ENCODE measurements at regions of chr20 and their contacts with region 1.

Region 1: GRCh38 chr20:62822788-62823651 is 6.2 kb downstream of the COL9A3 start:
- H3K4me3 Mint-ChIP-seq: no peak overlapping the region
- H3K27ac Mint-ChIP-seq: no peak overlapping the region
- H3K4me1 Mint-ChIP-seq: peaks cover 5% of the 10 kb centered on the region
- H3K27me3 Mint-ChIP-seq: peaks cover 33% of the 10 kb centered on the region

Region 2: DNA sequence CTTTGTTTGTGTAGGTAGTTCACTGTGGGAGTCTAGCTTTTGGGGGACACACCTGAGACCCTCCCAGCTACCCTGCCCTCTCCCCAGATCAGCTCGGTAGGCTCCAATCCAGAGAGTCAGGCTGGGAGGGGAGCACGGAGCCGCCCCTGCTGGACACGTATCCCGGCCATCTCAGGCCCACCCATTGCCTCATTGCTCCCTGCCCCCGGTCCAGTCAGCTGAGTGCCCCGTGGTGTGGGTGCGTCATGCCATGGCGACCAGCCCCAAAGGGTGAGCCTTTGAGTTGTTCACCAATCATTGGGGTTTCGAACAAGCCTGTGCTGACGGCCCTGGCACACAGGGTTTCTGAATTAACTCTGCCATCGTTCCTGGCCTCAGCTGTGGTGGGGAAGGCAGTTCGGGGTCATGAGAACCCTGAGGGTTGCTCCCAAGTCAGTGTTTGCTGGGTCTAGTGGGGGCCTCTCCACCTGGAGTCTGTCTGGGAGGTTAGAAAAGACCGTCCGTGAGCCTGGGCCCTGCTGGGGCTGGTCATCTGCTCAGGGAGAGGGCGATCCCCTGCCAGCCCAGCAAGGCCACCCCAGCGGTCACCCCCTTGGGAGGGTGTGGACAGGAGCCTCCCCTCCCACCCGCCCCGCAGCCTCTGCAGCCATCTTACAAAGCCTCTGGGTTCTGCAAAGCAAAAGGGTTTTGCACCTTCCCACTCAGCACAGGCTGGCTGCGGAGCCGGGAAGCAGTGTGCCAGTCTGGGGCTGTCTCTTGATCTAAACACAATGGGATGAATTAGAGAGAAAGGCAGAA is 79.8 kb before region 1 on chr20:
- intact Hi-C with region 1: no loop called
- H3K4me3 Mint-ChIP-seq: no peak overlapping the region
- H3K27ac Mint-ChIP-seq: no peak overlapping the region
- H3K4me1 Mint-ChIP-seq: peaks cover 17% of the 10 kb centered on the region
- H3K27me3 Mint-ChIP-seq: peaks cover 25% of the 10 kb centered on the region

Region 3: DNA sequence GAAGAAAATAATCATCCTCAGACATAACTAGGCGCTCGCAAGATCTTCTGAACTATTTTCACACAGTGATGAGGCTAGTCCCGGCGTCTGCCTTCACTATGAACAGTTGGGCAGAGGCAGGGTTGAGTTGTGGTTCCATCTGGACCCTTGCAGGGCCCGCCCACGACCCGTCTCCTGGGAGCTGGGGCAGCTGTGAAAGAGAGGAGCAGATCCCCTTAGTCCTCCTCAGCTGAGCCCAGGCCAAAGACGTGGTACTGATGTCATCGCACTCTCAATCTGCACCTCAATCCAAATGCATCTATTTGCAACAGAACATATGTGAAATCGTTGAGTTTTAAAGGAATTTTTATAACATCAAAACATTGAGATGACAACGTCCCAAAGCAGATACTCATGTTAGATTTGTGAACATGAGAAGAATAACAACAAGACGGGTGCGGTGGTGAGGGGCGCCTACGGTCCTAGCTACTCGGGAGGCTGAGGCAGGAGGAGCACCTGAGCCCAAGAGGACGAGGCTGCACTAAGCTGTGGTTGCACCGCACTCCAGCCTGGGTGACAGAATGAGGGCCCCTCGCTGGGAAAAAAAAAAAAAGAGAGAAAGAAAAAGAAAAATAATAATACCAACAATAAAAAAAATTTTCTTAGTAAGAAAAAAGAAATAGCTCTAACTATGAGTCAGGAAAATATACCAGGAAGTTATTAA is 23.3 kb after region 1 on chr20:
- intact Hi-C with region 1: loop called (anchors 1 kb)
- H3K4me3 Mint-ChIP-seq: no peak overlapping the region
- H3K27ac Mint-ChIP-seq: no peak overlapping the region
- H3K4me1 Mint-ChIP-seq: peaks cover 6% of the 10 kb centered on the region
- H3K27me3 Mint-ChIP-seq: no peaks in the 10 kb centered on the region